Mammary epithelial cell (primary cell): ENCODE measurements at regions of chr12 and their contacts with region 1.

Region 1: DNA sequence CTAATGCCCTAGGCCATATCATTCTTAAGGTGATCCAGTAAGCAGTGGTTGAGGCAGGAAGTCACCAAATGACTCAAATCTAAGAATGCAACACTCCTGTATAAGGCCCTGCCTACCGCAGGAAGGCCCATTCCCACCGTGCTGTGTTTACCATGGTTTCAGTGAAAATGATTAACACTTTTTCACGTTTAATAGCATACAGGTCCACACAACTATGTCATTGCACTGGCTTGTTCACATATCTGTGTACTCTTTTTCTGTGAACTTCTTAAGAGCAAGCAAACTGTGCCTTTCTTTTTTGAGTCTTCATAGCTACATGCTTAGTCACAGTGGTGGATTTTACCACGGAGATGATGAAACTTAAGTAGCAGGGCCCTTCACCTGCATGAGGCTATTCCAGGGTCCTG is 214.9 kb downstream of the CNTN1 start:
- DNase-seq: peak; percentile 91
- H3K4me3 ChIP-seq: peak overlapping the region in 2 of 3 experiments; percentile 3 to 11
- H3K27ac ChIP-seq: peak overlapping the region; percentile 93
- H3K4me1 ChIP-seq: peaks cover 15% of the 10 kb centered on the region
- H3K27me3 ChIP-seq: no peaks in the 10 kb centered on the region
- CTCF ChIP-seq: no peak

Region 2: DNA sequence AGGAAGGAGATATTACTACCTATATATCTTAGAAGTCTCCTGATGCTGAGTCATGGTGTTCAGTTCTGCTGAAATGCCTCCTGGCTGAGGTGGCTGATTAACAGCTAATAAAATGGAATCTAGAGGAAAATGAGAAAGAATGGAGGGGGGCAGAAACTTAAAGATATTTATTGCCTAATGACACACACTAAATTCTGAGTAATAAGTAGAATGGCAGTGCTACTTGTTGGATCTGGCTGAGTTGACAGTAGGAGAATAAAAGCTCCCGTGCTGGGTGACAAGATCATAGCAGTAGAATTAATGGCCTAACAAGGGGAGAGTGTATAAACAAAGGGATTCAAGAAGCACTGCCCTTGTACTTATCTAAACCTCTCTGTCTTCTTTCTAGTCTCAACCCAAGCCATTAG is 77.4 kb before region 1 on chr12:
- CTCF ChIA-PET with region 1: no interaction called
- dilution Hi-C with region 1: no loop called
- in situ Hi-C with region 1: no loop called
- intact Hi-C with region 1: loop called (anchors 5 kb)
- DNase-seq: peak; percentile 83
- H3K4me3 ChIP-seq: no peak overlapping the region
- H3K27ac ChIP-seq: peak overlapping the region; percentile 80
- H3K4me1 ChIP-seq: peaks cover 23% of the 10 kb centered on the region
- H3K27me3 ChIP-seq: no peaks in the 10 kb centered on the region
- CTCF ChIP-seq: no peak